ENCODE measurements at regions of chr11 and their contacts with region 1.

Region 1: GRCh38 chr11:111926505-111927391 is 8.0 kb downstream of the C11orf52 start:
- DNase-seq: peak; percentile 99
- H3K4me3 Mint-ChIP-seq: peak overlapping the region; percentile 91
- H3K27ac Mint-ChIP-seq: peak overlapping the region; percentile 89
- H3K4me1 Mint-ChIP-seq: peaks cover 13% of the 10 kb centered on the region
- H3K27me3 Mint-ChIP-seq: peaks cover 7% of the 10 kb centered on the region

Region 2: GRCh38 chr11:110147962-110148709 is 1778.6 kb before region 1 on chr11:
- intact Hi-C with region 1: no loop called
- DNase-seq: no peak
- H3K4me3 Mint-ChIP-seq: no peak overlapping the region
- H3K27ac Mint-ChIP-seq: no peak overlapping the region
- H3K4me1 Mint-ChIP-seq: no peaks in the 10 kb centered on the region
- H3K27me3 Mint-ChIP-seq: peaks cover 25% of the 10 kb centered on the region

Region 3: DNA sequence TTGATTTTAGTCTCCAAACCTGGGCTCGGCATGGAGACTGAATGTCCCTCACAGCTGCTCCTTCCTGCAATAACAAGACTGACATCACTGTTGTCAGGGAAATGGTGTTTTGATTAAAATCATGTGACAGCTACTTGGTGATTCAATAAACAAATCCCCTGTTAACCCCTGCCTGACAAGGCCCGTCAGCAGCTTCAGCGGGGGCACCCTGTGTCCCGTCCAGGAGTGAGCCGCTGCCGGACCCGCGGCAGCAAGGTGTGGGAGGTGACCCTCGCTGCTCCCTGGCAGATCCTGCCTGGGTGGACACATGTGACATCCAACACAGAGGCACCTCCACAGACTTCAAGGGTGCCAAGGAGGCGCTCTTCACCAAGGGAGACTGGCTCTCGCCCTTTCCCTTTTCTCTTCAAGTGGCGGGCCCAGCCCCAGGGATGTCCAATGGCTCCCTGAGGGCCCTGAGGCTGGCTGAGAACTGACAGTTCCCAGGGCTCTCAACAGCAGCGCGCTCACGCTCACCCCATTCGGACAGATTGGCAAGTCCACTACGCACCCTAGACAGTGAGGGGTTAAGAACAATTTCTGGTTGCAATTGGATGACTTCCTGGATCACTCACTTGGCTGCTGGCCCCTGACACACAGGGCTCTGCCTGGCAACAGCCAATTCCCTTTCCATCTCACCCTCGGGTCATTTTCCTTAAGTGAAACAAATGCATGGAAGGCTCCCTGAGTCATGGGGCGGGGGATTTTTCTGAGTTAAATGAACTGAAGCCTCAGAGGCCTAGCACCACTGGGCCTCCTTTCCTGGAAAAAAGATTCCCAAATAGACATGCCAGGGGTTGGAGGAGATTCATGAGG is 191.3 kb before region 1 on chr11:
- intact Hi-C with region 1: no loop called
- DNase-seq: no peak
- H3K4me3 Mint-ChIP-seq: no peak overlapping the region
- H3K27ac Mint-ChIP-seq: peak overlapping the region; percentile 15
- H3K4me1 Mint-ChIP-seq: peaks cover 1% of the 10 kb centered on the region
- H3K27me3 Mint-ChIP-seq: no peaks in the 10 kb centered on the region

Region 4: DNA sequence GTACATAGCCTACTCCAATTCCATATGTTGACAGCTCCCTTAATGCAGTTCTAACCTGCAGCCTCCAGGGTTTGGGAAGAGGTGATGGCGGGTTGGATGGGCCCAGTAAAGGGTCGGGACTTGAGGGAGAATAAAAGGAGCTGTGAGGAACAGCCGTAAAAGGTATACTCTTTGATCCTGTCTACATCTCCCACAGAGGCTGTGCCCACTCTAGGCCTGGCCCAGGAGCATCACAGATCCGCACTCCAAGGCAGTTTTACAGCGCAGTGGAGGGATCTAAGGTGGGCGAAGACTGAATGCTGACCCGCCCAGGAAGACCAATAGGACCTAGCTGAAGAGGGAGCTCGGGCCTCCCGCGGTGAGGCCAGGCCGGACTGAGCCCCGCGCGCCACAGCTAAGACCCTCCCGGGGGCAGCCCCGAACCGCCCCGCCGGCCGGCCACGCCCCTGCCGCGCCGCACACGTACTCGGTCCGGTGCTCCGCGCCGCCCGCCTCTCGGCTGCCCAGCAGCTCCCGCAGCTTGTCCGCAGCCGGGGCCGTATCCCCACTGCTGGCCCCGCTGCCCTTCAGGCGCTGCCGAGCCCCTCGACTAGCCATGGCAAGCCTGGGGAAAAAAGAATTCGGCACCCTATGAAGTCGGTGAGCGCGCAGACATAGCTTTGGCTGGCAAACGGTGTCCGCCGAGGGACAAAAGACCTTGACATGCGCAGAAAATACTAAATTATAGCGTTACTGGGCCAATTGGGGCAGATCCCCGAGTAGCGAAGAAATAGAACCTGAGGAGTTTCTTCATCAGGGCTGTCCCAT is 55.7 kb before region 1 on chr11 and contains the start of gene ALG9:
- intact Hi-C with region 1: loop called (anchors 2 kb)
- DNase-seq: peak; percentile 97
- H3K4me3 Mint-ChIP-seq: peak within 1 kb of the TSS; percentile 96
- H3K27ac Mint-ChIP-seq: peak within 1 kb of the TSS; percentile 90
- H3K4me1 Mint-ChIP-seq: peaks cover 11% of the 10 kb centered on the region
- H3K27me3 Mint-ChIP-seq: no peaks in the 10 kb centered on the region
- total RNA-seq, gene ALG9: 32.6 and 32.9 TPM in 2 replicates

Region 5: DNA sequence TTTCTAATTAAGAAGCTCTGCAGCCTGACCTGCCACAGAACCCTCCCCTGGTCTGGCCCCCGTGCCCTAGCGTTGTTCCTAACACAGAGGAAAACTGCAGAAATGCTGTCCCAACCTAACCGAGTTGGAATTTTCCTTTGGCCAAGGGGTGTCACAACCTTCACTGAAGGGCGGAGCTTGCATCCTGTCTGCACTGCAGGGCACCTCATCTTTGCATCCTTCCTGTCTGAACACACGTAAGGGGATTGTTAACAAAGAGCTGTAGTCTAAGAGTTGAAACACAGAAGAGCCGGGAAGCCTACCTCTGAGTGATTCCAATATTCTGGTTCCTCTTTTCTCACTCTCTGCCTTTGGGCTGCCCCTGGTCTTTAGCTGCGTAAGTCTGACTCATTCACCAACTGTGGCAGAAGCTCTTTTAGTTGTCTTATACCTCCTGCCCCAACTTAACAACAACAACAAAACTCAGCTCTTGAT is 12.0 kb after region 1 on chr11:
- intact Hi-C with region 1: loop called (anchors 1 kb)
- DNase-seq: peak; percentile 81
- H3K4me3 Mint-ChIP-seq: peak overlapping the region; percentile 91
- H3K27ac Mint-ChIP-seq: peak overlapping the region; percentile 95
- H3K4me1 Mint-ChIP-seq: peaks cover 50% of the 10 kb centered on the region
- H3K27me3 Mint-ChIP-seq: no peaks in the 10 kb centered on the region

Region 6: GRCh38 chr11:112074026-112074811 is 147.5 kb after region 1 on chr11 and contains the start of gene NKAPD1:
- intact Hi-C with region 1: loop called (anchors 2 kb)
- DNase-seq: peak; percentile 95
- H3K4me3 Mint-ChIP-seq: peak within 1 kb of the TSS; percentile 95
- H3K27ac Mint-ChIP-seq: peak within 1 kb of the TSS; percentile 96
- H3K4me1 Mint-ChIP-seq: peaks cover 29% of the 10 kb centered on the region
- H3K27me3 Mint-ChIP-seq: peaks cover 4% of the 10 kb centered on the region
- total RNA-seq, gene NKAPD1: 24.4 and 27.0 TPM in 2 replicates

Region 7: GRCh38 chr11:112226062-112226830 is 299.5 kb after region 1 on chr11 and contains the start of gene PTS:
- intact Hi-C with region 1: loop called (anchors 2 kb)
- DNase-seq: peak; percentile 96
- H3K4me3 Mint-ChIP-seq: peak within 1 kb of the TSS; percentile 94
- H3K27ac Mint-ChIP-seq: peak within 1 kb of the TSS; percentile 94
- H3K4me1 Mint-ChIP-seq: peaks cover 17% of the 10 kb centered on the region
- H3K27me3 Mint-ChIP-seq: peaks cover 3% of the 10 kb centered on the region
- total RNA-seq, gene PTS: 33.1 and 34.4 TPM in 2 replicates

Region 8: GRCh38 chr11:112911124-112911523 is 984.4 kb after region 1 on chr11:
- intact Hi-C with region 1: no loop called
- DNase-seq: no peak
- H3K4me3 Mint-ChIP-seq: no peak overlapping the region
- H3K27ac Mint-ChIP-seq: no peak overlapping the region
- H3K4me1 Mint-ChIP-seq: no peaks in the 10 kb centered on the region
- H3K27me3 Mint-ChIP-seq: no peaks in the 10 kb centered on the region

Measured in activated CD4-positive, alpha-beta T cell treated with anti-CD3 and anti-CD28 coated beads, Interleukin-2, amount 10 ng/mL, durations not matched to agents 24 days and 14 days (primary cell).